ENCODE measurements at regions of chr19 and their contacts with region 1.

Region 1: GRCh38 chr19:34145741-34146202 is 26.5 kb upstream of the LSM14A start:
- DNase-seq: peak; percentile 49
- ATAC-seq: peak; percentile 84
- H3K4me3 Mint-ChIP-seq: no peak overlapping the region
- H3K27ac Mint-ChIP-seq: no peak overlapping the region
- H3K4me1 Mint-ChIP-seq: peaks cover 10% of the 10 kb centered on the region; the same call in 1 of the 2 replicates
- H3K27me3 Mint-ChIP-seq: no peaks in the 10 kb centered on the region
- CTCF ChIP-seq: peak; percentile 78

Region 2: DNA sequence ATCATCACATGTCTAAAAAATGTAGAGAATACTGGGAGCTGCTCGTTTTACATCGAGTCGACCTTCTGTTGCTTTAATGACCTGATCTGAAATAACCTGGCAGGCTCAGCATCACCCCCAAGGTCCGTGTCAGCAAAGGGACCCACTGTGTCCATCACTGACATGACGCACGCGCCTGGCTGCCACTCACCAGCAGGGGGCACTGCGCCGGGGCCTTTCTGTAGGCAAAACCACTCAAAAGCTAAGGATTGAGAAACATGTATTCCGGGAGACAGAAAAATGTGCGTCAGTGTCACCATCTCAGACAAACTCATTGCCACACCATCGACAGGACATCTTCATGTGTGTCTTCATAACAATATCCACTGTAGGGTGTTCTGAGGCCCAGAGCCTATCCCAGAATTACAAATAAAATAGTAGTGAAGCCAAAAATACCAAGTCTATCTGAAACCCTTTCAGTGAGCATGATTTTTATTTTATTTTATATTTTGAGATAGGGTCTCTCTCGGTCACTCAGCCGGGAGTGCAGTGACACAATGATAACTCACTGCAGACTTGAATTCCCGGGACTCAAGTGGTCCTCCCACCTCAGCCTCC is 103.7 kb before region 1 on chr19:
- CTCF ChIA-PET with region 1: interaction called, 17 read pairs
- POLR2A ChIA-PET with region 1: no interaction called
- DNase-seq: peak; percentile 91
- ATAC-seq: peak; percentile 72
- H3K4me3 Mint-ChIP-seq: no peak overlapping the region
- H3K27ac Mint-ChIP-seq: no peak overlapping the region
- H3K4me1 Mint-ChIP-seq: no peaks in the 10 kb centered on the region
- H3K27me3 Mint-ChIP-seq: no peaks in the 10 kb centered on the region; the same call in 1 of the 2 replicates
- CTCF ChIP-seq: peak; percentile 93

Region 3: GRCh38 chr19:34120846-34121639 is 24.7 kb before region 1 on chr19:
- CTCF ChIA-PET with region 1: interaction called, 56 read pairs
- POLR2A ChIA-PET with region 1: no interaction called
- DNase-seq: peak; percentile 66
- ATAC-seq: peak; percentile 68; the same call in 1 of the 2 replicates
- H3K4me3 Mint-ChIP-seq: no peak overlapping the region
- H3K27ac Mint-ChIP-seq: no peak overlapping the region
- H3K4me1 Mint-ChIP-seq: 0 out of 2 replicates have a peak, but pooled peaks cover 3% of the 10 kb centered on the region
- H3K27me3 Mint-ChIP-seq: no peaks in the 10 kb centered on the region; the same call in 1 of the 2 replicates
- CTCF ChIP-seq: peak; percentile 62

Region 4: GRCh38 chr19:34128558-34129250 is 17.1 kb before region 1 on chr19:
- CTCF ChIA-PET with region 1: interaction called, 19 read pairs
- POLR2A ChIA-PET with region 1: no interaction called
- DNase-seq: no peak
- ATAC-seq: no peak
- H3K4me3 Mint-ChIP-seq: no peak overlapping the region
- H3K27ac Mint-ChIP-seq: no peak overlapping the region
- H3K4me1 Mint-ChIP-seq: 0 out of 2 replicates have a peak, but pooled peaks cover 3% of the 10 kb centered on the region
- H3K27me3 Mint-ChIP-seq: peaks cover 9% of the 10 kb centered on the region
- CTCF ChIP-seq: no peak

Region 5: GRCh38 chr19:34134190-34135053 is 11.3 kb before region 1 on chr19:
- CTCF ChIA-PET with region 1: interaction called, 19 read pairs
- POLR2A ChIA-PET with region 1: interaction called, 5 read pairs
- DNase-seq: peak; percentile 91
- ATAC-seq: peak; percentile 97
- H3K4me3 Mint-ChIP-seq: peak overlapping the region; percentile 87
- H3K27ac Mint-ChIP-seq: peak overlapping the region; percentile 98
- H3K4me1 Mint-ChIP-seq: peaks cover 4% of the 10 kb centered on the region; the same call in 1 of the 2 replicates
- H3K27me3 Mint-ChIP-seq: peaks cover 12% of the 10 kb centered on the region; the same call in 1 of the 2 replicates
- CTCF ChIP-seq: no peak

Region 6: GRCh38 chr19:34193439-34193838 is 47.7 kb after region 1 on chr19:
- CTCF ChIA-PET with region 1: no interaction called
- POLR2A ChIA-PET with region 1: no interaction called
- DNase-seq: no peak
- ATAC-seq: no peak
- H3K4me3 Mint-ChIP-seq: no peak overlapping the region
- H3K27ac Mint-ChIP-seq: 0 out of 2 replicates have a peak overlapping the region, but pooled peaks have one; percentile 19
- H3K4me1 Mint-ChIP-seq: peaks cover 29% of the 10 kb centered on the region
- H3K27me3 Mint-ChIP-seq: no peaks in the 10 kb centered on the region
- CTCF ChIP-seq: no peak

Measured in WTC11 (cell line).